ENCODE measurements at regions of chr16 and their contacts with region 1.

Region 1: GRCh38 chr16:55101026-55101425 is 170.4 kb downstream of the IRX5 start:
- DNase-seq: no peak
- ATAC-seq: no peak
- H3K4me3 Mint-ChIP-seq: no peak overlapping the region
- H3K27ac Mint-ChIP-seq: no peak overlapping the region
- H3K4me1 Mint-ChIP-seq: peaks cover 6% of the 10 kb centered on the region; the same call in 1 of the 2 replicates
- H3K27me3 Mint-ChIP-seq: no peaks in the 10 kb centered on the region
- CTCF ChIP-seq: no peak

Region 2: GRCh38 chr16:53933407-53933806 is 1167.6 kb before region 1 on chr16:
- CTCF ChIA-PET with region 1: no interaction called
- POLR2A ChIA-PET with region 1: interaction called, 12 read pairs
- DNase-seq: no peak
- ATAC-seq: no peak
- H3K4me3 Mint-ChIP-seq: no peak overlapping the region
- H3K27ac Mint-ChIP-seq: no peak overlapping the region
- H3K4me1 Mint-ChIP-seq: 0 out of 2 replicates have a peak, but pooled peaks cover 3% of the 10 kb centered on the region
- H3K27me3 Mint-ChIP-seq: no peaks in the 10 kb centered on the region
- CTCF ChIP-seq: no peak